Posterior cingulate gyrus (tissue), 11 donors: ENCODE measurements at regions of chr9 and their contacts with region 1.

Region 1: DNA sequence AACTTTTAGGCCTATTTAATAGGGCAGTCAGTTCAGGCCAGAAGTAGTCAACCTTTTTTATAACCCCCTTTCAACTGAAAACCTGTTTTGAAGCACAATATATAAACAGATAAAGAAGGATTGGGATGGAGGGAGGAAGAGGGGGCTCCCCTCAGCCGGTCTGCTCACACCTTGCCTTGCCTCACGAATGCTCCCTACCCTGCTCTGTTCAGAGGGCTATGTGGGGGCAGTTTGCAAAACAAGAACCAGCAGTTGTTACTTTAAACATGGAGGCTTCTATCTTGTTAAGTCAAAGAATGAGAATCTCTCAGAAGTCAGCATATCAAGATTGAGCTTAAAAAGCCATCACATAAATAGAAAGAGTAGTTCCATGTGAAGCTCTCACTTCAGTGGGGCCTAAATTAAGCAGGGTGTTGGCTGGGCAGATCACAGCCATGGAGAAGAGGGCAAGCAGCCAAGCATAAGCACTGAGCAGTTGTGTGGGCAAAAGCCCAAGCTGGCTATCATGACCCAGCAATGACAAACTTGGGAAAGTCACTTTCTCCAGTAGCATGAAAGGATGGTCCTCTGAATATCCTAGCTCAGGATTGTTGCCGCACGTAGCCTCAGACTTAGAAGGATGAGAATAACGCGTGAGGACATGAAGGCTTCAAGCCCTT is 70.6 kb downstream of the ALDH1A1 start:
- DNase-seq: peak in 3 of 10 donors; percentile 11 to 81 (median 52)

Region 2: GRCh38 chr9:73009649-73010288 is 127.5 kb after region 1 on chr9:
- intact Hi-C with region 1: loop called (anchors 10 kb)
- DNase-seq: no peak